AG04449 (cell line): ENCODE measurements at regions of chr1 and their contacts with region 1.

Region 1: DNA sequence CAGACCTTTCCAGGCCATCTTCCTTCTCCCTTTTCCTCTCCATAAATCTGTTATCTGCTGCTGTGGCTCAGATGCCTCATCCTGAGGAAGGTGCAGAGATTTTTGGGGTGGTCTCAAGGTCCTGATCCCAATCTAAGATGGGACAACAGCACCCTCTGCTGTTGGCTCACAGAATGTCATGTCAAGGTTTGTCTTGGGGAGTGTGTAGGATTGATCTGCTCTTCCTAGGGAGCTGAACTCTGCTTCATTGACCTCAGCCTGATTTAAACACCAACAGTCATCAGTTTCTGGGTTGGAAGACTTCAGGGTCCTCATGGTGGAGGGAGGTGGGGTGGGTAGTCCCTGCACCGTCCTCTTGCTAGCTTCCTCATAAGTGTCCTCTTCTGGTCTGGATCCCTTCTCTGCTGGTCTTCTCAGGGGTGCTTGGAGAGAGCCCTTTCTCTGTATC is 62.8 kb upstream of the LAX1 start:
- DNase-seq: no peak
- H3K4me3 ChIP-seq: no peak overlapping the region
- CTCF ChIP-seq: peak; percentile 68

Region 2: DNA sequence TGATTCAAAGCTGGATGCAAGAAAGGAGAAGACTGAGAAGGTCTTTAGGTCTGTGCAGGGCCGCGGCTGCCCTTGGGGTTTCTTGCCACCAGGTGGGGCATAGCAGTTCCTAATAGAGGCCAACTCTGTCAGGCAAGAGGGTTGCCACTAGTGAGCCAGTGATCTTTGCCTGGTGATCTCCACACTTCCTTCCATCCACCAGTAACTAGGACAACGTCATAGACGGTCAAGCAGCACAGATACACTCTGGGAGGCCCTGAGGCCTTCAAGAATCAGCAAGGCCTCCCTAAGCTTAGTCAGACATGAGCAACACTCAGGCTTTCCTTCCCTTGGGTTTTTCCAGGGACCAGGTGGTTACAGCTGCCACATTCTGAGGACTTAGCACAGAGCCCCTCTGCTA is 108.4 kb before region 1 on chr1:
- CTCF ChIA-PET with region 1: interaction called, 11 read pairs
- POLR2A ChIA-PET with region 1: no interaction called
- DNase-seq: no peak
- H3K4me3 ChIP-seq: no peak overlapping the region
- CTCF ChIP-seq: no peak

Region 3: GRCh38 chr1:203625628-203626019 is 76.5 kb before region 1 on chr1:
- CTCF ChIA-PET with region 1: interaction called, 28 read pairs
- POLR2A ChIA-PET with region 1: no interaction called
- DNase-seq: no peak
- H3K4me3 ChIP-seq: no peak overlapping the region
- CTCF ChIP-seq: no peak

Region 4: DNA sequence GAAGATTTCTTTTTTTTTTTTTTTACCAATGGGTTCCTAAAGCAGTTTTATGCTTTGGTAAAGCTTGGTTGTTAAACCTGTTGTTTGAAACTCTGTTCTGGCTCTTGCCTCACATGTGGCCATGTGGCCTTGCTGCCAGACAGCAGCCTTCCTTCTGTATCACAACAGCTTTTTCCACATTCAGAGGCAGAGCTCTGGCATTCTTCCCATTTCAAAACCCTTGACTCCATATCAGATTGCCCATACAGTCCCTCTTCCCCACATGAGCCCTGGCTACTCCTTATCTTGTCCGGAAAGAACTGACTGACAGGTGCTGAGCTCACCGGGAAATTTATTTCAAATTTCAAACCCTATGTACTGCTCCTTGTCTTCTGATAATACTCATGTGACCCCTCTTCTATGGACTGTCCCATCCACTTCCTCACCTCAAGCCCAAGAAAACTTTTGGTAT is 24.3 kb after region 1 on chr1:
- CTCF ChIA-PET with region 1: interaction called, 19 read pairs
- POLR2A ChIA-PET with region 1: no interaction called
- DNase-seq: no peak
- H3K4me3 ChIP-seq: no peak overlapping the region
- CTCF ChIP-seq: no peak

Region 5: GRCh38 chr1:203835494-203835893 is 133.3 kb after region 1 on chr1:
- CTCF ChIA-PET with region 1: no interaction called
- POLR2A ChIA-PET with region 1: no interaction called
- DNase-seq: no peak
- H3K4me3 ChIP-seq: no peak overlapping the region
- CTCF ChIP-seq: no peak